Dendritic cell treated with granulocyte-macrophage colony-stimulating factor and Interleukin-4, amounts not matched to agents 40 ng/mL and 50 ng/mL, for 4 days (primary cell): ENCODE measurements at regions of chr12 and their contacts with region 1.

Region 1: GRCh38 chr12:93541578-93542225 is 30.8 kb upstream of the SOCS2 start:
- H3K4me3 Mint-ChIP-seq: no peak overlapping the region
- H3K27ac Mint-ChIP-seq: no peak overlapping the region
- H3K4me1 Mint-ChIP-seq: no peaks in the 10 kb centered on the region
- H3K27me3 Mint-ChIP-seq: no peaks in the 10 kb centered on the region

Region 2: GRCh38 chr12:94244165-94245133 is 702.7 kb after region 1 on chr12:
- intact Hi-C with region 1: loop called (anchors 5 kb)
- H3K4me3 Mint-ChIP-seq: no peak overlapping the region
- H3K27ac Mint-ChIP-seq: peak overlapping the region; percentile 25
- H3K4me1 Mint-ChIP-seq: peaks cover 67% of the 10 kb centered on the region
- H3K27me3 Mint-ChIP-seq: peaks cover 4% of the 10 kb centered on the region